Activated naive CD4-positive, alpha-beta T cell treated with anti-CD3 and anti-CD28 coated beads for 36 hours (primary cell): ENCODE measurements at regions of chr11 and their contacts with region 1.

Region 1: DNA sequence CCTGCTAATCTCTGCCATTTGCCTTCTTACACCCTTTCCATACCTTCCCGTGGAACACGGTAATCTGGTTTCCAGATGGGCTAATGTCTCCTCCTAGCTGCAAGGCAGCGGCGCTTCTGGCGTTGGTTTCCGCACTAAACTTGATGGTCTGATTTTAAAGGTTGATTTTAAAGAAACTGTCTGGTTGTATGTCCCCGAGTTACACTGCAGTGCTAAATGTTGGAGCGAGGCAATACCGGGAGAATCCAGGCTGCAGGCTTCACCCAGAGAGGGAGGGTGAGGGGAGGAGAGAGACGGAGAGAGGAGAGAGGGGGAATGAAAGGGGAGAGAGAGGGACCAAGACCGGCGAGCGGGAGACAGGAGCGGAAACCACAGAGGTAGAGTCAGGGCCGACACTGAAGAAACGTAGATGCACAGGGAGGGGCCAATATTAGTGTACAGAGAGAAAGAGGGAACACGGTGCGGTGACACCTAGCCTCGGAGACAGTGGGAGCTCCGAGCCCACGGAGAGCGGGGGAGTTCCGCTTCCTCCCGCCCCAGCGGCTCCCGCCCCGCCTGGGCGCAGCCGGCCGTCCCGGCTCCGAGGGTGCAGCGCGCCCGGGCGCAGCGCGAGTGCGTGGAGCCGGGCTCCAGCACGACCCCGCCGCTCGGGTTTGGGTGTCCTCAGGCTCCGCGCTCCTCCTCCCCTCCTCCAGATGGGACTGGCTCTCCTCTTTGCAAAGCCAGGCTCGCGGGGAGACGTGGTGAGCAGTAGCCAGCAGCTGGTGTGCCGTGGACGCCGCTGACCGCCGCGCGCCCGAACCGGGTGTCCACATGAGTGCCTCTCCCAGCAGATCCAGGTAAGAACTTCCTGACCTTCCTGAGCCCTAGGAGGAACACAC is 71.9 kb upstream of the GRAMD1B start:
- DNase-seq: peak; percentile 71
- H3K4me3 Mint-ChIP-seq: peak overlapping the region; percentile 87
- H3K27ac Mint-ChIP-seq: peak overlapping the region; percentile 77
- H3K4me1 Mint-ChIP-seq: peaks cover 42% of the 10 kb centered on the region
- H3K27me3 Mint-ChIP-seq: peaks cover 40% of the 10 kb centered on the region

Region 2: DNA sequence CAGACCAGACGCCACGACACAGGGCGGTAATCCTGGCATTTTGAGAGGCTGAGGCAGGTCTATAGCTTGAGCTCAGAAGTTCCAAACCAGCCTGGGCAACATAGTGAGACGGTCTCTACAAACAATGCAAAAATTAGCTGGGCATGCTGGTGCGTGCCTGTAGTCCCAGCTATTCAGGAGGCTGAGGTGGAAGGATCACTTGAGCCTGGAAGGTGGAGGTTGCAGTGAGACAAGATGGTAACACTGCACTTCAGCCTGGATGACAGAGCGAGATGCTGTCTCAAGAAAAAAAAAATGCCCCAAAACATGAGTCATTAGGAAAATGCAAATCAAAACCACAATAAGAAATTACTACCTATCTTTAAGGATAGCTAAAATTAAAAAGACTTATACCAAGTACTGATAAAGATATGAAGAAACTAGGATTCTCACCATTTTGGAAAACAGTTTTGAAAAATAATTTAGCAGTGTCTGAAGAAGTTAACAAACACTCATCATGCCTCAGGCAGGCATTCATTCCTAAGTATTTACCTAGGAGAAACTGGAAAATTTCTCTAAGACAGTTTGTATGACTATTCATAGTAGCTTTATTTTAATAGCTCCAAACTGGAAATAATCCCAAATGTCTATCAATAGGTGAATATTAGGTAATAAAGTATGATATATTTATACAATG is 19.7 kb before region 1 on chr11:
- CTCF ChIA-PET with region 1: interaction called, 6 read pairs
- intact Hi-C with region 1: loop called (anchors 1 kb)
- DNase-seq: peak; percentile 12
- H3K4me3 Mint-ChIP-seq: no peak overlapping the region
- H3K27ac Mint-ChIP-seq: no peak overlapping the region
- H3K4me1 Mint-ChIP-seq: peaks cover 10% of the 10 kb centered on the region
- H3K27me3 Mint-ChIP-seq: peaks cover 27% of the 10 kb centered on the region

Region 3: GRCh38 chr11:123429913-123430720 is 71.9 kb after region 1 on chr11 and contains the start of gene GRAMD1B:
- CTCF ChIA-PET with region 1: interaction called, 3 read pairs
- intact Hi-C with region 1: loop called (anchors 1 kb)
- DNase-seq: peak; percentile 87
- H3K4me3 Mint-ChIP-seq: peak within 1 kb of the TSS; percentile 92
- H3K27ac Mint-ChIP-seq: peak within 1 kb of the TSS; percentile 85
- H3K4me1 Mint-ChIP-seq: peaks cover 33% of the 10 kb centered on the region
- H3K27me3 Mint-ChIP-seq: peaks cover 2% of the 10 kb centered on the region
- total RNA-seq, gene GRAMD1B: 43.7 to 47.2 TPM

Region 4: DNA sequence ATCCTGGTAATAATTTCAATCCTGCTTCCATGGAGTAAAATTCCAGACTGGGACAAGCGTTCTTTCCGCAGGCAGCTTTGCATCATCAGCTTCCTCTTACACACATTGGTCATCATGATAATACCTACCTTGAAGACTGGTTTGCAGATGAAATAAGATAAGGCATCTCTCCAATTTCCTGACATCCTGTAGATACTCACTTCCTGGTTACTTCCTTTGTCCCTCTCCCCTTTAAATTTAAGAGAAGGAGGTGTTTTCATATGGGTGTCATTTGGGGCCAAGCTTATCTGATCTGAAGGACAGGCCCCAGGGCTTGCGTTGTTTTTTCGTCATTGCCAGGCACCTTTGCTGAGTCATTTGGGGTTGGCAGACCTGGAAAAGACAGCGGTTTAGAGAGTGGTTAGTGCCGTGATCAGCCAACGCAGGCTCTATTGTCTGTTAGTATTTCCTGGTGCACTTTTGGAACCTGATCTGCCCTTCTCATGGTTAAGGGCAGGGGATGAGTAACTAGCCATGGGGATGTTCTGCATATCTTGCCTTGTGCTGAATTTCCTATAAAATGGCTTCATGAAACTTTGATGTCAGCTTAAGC is 96.0 kb after region 1 on chr11:
- CTCF ChIA-PET with region 1: interaction called, 5 read pairs
- intact Hi-C with region 1: loop called (anchors 1 kb)
- DNase-seq: peak; percentile 93
- H3K4me3 Mint-ChIP-seq: peak overlapping the region; percentile 72
- H3K27ac Mint-ChIP-seq: peak overlapping the region; percentile 93
- H3K4me1 Mint-ChIP-seq: peaks cover 73% of the 10 kb centered on the region
- H3K27me3 Mint-ChIP-seq: no peaks in the 10 kb centered on the region